ENCODE measurements at regions of chr19 and their contacts with region 1.

Region 1: DNA sequence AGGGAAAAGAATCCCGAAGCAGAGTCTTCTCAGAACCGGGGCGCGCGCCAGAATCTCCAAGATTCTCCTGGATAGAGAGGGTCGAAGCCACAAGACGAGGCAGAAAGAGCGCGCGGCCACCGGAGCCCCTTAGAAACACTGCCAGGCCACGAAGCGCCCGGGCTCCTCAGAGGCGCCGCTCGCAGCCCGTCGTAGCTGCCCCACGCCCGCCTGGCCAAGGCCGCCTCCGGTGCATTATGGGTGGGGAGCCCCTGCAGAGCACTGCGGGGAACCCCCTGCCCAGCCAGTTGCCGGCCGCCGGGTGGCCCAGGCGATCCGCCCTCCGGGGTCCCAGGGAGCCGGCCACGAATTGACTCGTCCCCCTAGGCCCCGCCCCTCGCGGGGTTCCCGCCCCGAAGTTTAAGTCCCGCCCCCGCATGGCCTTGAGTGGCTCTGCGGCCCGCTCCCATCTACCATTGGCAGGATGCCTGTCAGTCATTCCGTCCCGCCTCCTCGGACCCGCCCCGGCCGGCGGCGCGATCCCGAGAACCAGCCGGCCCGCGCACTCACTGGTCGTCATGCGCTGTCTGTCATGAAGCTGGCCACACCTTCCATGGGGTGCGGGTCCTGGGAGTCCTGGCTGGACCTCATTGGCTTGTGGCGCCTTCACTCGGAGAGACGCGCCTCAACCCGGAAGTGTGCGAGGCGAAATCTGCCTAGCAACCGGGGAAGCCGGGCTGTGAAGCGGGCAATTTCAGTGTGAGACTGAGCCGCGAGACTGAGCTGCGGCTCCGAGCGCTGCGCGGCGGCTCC is 20.2 kb upstream of the GATAD2A start:
- DNase-seq: peak; percentile 99
- ATAC-seq: peak; percentile 83 to 94 (median 85)
- H3K4me3 ChIP-seq: peak overlapping the region; percentile 58
- H3K4me3 Mint-ChIP-seq: peak overlapping the region; percentile 89
- H3K27ac ChIP-seq: peak overlapping the region; percentile 90
- H3K27ac Mint-ChIP-seq: peak overlapping the region; percentile 98 to 100
- H3K4me1 ChIP-seq: peaks cover 46% of the 10 kb centered on the region
- H3K4me1 Mint-ChIP-seq: peaks cover 42 to 48% of the 10 kb centered on the region in 2 donors
- H3K27me3 ChIP-seq: no peaks in the 10 kb centered on the region
- H3K27me3 Mint-ChIP-seq: no peaks in the 10 kb centered on the region
- CTCF ChIP-seq: no peak

Region 2: DNA sequence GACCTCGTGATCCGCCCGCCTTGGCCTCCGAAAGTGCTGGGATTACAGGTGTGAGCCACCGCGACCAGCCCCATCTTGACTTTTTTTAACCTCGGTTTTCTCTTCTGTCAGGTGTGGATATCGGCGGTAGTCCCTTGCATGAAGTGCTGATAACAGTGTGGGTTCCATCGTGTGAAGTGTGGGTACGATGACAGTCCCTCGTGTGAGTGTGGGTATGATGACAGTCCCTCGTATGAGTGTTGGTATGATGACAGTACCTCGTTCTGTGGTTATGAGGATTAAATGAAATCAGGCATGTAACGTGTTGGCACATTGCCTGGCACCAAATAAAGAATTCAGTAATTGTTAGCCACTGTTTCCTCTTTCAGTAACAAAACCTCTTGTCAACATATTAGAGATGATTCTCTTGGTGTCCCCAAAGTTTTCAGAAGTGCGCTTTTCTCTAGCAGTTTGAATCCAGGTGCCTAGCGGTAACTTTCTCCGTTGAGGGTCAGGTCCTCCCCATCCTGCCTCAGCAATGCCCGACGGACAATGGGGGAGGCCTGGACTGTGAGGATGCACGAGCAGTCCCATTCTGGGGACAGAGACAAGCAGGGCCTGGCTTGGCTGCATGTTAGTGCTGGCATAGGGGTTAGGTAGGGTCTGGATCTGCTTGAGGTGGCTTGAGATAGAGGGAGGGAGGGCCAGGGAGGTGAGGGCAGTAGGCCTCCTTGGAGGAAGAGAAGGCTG is 35.4 kb after region 1 on chr19:
- intact Hi-C with region 1: loop called (anchors 5 kb)
- DNase-seq: peak; percentile 65 to 85
- ATAC-seq: peak; percentile 86 to 93 (median 91)
- H3K4me3 ChIP-seq: no peak overlapping the region
- H3K4me3 Mint-ChIP-seq: peak overlapping the region; percentile 82
- H3K27ac ChIP-seq: peak overlapping the region; percentile 86
- H3K27ac Mint-ChIP-seq: peak overlapping the region; percentile 88 to 94
- H3K4me1 ChIP-seq: peaks cover 93% of the 10 kb centered on the region
- H3K4me1 Mint-ChIP-seq: peaks cover 58 to 67% of the 10 kb centered on the region in 2 donors
- H3K27me3 ChIP-seq: no peaks in the 10 kb centered on the region
- H3K27me3 Mint-ChIP-seq: no peaks in the 10 kb centered on the region
- CTCF ChIP-seq: no peak